CD8-positive, alpha-beta memory T cell (primary cell): ENCODE measurements at regions of chr17 and their contacts with region 1.

Region 1: DNA sequence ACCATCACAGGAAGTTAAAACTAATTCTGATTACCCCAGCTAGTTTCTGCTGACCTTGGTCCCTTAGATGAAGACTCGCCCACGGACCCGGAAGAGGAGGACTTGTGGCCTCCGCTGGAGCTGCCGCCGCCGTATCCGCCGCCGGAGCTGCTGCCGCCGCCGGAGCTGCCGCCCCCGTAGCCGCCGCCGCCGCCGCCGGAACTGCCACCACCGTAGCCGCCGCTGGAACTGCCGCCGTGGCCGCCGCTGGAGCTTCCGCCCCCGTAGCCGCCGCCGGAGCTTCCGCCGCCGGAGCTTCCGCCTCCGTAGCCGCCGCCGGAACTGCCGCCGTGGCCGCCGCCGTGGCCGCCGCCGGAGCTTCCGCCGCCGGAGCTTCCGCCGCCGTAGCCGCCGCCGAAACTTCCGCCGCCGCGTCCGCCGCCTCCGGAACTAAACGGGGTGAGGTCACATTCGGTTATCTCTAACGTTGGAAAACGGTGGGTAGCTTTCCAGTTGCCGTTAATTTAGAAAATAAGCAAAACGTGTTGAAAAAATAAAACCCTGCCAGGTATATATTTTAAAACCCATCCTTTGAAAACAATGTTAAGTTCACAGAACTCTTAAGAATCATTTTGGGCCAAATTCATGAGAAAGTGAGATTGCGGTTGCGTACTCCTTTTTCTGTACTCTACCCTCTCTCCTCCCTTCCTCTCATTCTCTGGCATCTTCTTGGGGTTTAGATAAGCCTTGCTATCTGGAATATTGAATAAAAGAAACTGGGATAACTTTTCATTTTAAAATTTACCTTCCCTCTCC is 3.5 kb downstream of the KRT10 start:
- DNase-seq: peak; percentile 78 to 86 (median 81)
- H3K4me3 ChIP-seq: peak overlapping the region; percentile 83
- H3K4me3 Mint-ChIP-seq: peak overlapping the region; percentile 89 to 99 (median 92)
- H3K27ac ChIP-seq: peak overlapping the region; percentile 71
- H3K27ac Mint-ChIP-seq: peak overlapping the region; percentile 90 to 98 (median 94)
- H3K4me1 ChIP-seq: peaks cover 19% of the 10 kb centered on the region
- H3K4me1 Mint-ChIP-seq: peaks cover 21 to 29% (median 28%) of the 10 kb centered on the region in 3 donors
- H3K27me3 ChIP-seq: no peaks in the 10 kb centered on the region
- H3K27me3 Mint-ChIP-seq: peaks cover 4 to 22% of the 10 kb centered on the region in 2 donors

Region 2: DNA sequence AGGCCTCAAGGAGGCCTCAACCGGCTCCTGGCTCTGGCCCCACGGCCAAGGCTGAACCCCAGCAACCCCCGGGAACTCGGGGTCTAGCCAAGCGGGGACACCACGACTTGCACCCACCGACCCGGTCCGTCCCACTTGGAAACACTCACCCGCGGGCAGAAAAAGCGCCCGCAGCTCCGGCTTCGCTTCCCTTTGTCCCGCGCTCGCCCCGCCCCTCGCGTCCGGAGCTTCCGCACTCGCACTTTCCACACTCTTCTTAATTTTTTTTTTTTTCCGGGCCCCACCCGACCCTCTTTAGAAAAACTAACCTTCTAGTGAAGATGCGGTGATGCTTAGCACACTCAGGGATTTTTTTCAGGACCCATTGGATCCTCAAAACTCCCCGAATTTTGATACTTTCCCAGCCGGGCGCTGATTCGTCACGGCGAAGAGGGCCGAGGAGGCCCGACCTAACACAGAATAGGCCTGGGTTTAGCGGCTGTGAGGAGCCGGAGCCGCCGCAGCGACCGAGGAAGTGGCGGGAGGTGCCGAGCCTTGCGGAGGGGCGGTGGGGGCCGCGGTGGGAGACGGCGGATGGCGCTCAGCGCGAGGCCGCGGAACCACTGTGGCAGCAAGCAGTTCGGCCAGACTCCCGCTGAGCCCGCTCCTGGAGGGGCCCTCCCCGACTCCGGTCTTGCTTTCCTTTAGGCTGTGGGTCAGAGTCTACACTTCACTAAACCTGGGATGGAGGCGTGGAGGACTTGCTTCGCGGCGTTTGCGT is 171.1 kb before region 1 on chr17 and contains the start of gene SMARCE1:
- CTCF ChIA-PET with region 1: no interaction called
- POLR2A ChIA-PET with region 1: interaction called, 10 read pairs
- DNase-seq: peak; percentile 56 to 80 (median 77)
- H3K4me3 ChIP-seq: peak within 1 kb of the TSS; percentile 99
- H3K4me3 Mint-ChIP-seq: peak within 1 kb of the TSS; percentile 93 to 100 (median 95)
- H3K27ac ChIP-seq: peak within 1 kb of the TSS; percentile 93
- H3K27ac Mint-ChIP-seq: peak within 1 kb of the TSS; percentile 95 to 100 (median 98)
- H3K4me1 ChIP-seq: peaks cover 34% of the 10 kb centered on the region
- H3K4me1 Mint-ChIP-seq: peaks cover 45 to 60% (median 57%) of the 10 kb centered on the region in 3 donors
- H3K27me3 ChIP-seq: no peaks in the 10 kb centered on the region
- H3K27me3 Mint-ChIP-seq: no peaks in the 10 kb centered on the region
- total RNA-seq, gene SMARCE1: 101 to 108 TPM